Natural killer cell (primary cell): ENCODE measurements at regions of chr10 and their contacts with region 1.

Region 1: GRCh38 chr10:123994417-123995081 is 98.8 kb downstream of the CHST15 start:
- DNase-seq: peak; percentile 79 to 84
- ATAC-seq: peak; percentile 84 to 90 (median 87)
- H3K4me3 ChIP-seq: no peak overlapping the region
- H3K4me3 Mint-ChIP-seq: no peak overlapping the region
- H3K27ac ChIP-seq: no peak overlapping the region
- H3K27ac Mint-ChIP-seq: no peak overlapping the region
- H3K4me1 ChIP-seq: peaks cover 30% of the 10 kb centered on the region
- H3K4me1 Mint-ChIP-seq: peaks cover 10 to 18% of the 10 kb centered on the region in 2 donors
- H3K27me3 ChIP-seq: peaks cover 34% of the 10 kb centered on the region
- H3K27me3 Mint-ChIP-seq: peaks cover 66 to 80% of the 10 kb centered on the region in 2 donors
- CTCF ChIP-seq: peak; percentile 99

Region 2: DNA sequence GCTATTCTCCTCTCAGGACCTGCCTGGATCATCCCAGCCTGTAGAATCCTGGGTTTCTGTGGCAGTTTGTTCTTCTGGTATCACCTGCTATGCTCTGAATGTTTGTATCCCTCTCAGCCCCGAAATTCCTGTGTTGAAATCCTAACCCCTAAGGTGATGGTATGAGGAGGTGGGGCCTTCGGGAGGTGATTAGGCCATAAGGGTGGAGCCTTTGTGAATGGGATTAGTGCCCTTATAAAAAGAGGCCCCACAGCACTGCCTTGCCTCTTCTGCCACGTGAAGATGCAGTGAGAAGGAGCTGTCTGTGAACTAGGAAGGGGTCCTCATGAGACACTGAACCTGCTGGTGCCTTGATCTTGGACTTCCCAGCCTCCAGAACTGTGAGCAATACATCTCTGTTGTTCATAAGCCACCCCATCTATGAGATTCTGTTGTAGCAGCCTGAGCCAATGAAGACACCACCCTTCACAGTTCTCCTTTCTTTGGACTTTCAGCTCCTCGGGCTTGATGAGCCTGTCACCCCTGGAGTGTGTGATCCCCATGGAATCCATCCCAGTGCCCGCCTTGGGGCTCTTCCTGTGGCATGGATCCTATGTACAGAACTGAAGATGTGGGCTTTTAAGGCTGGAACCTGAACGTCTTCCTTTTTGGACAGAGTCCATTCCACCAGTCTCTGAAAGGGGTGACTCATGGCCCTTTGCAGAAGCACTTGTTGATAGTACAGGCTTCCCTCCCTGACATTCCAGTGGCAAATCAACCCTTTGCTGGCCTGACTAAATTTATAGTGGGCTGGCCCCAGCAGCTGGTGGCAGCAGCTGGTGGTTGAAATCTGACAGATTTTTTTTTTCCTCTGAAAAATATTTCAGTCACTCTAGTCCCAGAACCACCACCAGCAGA is 1867.5 kb before region 1 on chr10:
- intact Hi-C with region 1: no loop called
- DNase-seq: no peak
- ATAC-seq: no peak
- H3K4me3 ChIP-seq: no peak overlapping the region
- H3K4me3 Mint-ChIP-seq: no peak overlapping the region
- H3K27ac ChIP-seq: no peak overlapping the region
- H3K27ac Mint-ChIP-seq: no peak overlapping the region
- H3K4me1 ChIP-seq: no peaks in the 10 kb centered on the region
- H3K4me1 Mint-ChIP-seq: no peaks in the 10 kb centered on the region
- H3K27me3 ChIP-seq: no peaks in the 10 kb centered on the region
- H3K27me3 Mint-ChIP-seq: peaks cover 8 to 22% of the 10 kb centered on the region in 2 donors
- CTCF ChIP-seq: no peak

Region 3: DNA sequence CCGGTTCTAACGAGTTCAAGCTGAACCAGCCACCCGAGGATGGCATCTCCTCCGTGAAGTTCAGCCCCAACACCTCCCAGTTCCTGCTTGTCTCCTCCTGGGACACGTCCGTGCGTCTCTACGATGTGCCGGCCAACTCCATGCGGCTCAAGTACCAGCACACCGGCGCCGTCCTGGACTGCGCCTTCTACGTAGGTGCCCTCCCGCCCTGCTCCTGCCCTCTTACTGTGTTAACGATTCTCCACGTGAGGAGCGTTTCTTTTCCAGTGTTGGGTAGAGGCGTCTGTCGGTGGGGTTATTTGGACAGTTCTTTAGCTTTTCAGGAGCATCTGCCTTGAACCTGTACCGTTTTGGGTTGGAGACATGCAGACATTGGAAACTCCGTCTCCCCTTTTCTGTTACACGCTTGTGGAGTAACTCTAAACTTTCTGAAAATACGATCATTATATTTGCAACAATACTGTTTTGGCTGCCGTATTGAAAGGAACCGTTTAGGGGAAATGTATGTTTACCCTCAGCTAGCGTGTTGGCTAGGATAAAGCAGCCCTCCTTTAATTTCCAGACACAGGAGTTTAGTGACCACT is 839.5 kb before region 1 on chr10:
- intact Hi-C with region 1: no loop called
- DNase-seq: peak; percentile 21 to 57
- ATAC-seq: no peak
- H3K4me3 ChIP-seq: peak overlapping the region; percentile 99
- H3K4me3 Mint-ChIP-seq: peak overlapping the region; percentile 99
- H3K27ac ChIP-seq: peak overlapping the region; percentile 93
- H3K27ac Mint-ChIP-seq: peak overlapping the region; percentile 96 to 100
- H3K4me1 ChIP-seq: peaks cover 30% of the 10 kb centered on the region
- H3K4me1 Mint-ChIP-seq: peaks cover 56 to 58% of the 10 kb centered on the region in 2 donors
- H3K27me3 ChIP-seq: peaks cover 29% of the 10 kb centered on the region
- H3K27me3 Mint-ChIP-seq: peaks cover 18 to 19% of the 10 kb centered on the region in 2 donors
- CTCF ChIP-seq: no peak

Region 4: GRCh38 chr10:124106241-124106879 is 111.8 kb after region 1 on chr10:
- intact Hi-C with region 1: no loop called
- DNase-seq: no peak
- ATAC-seq: no peak
- H3K4me3 ChIP-seq: no peak overlapping the region
- H3K4me3 Mint-ChIP-seq: no peak overlapping the region
- H3K27ac ChIP-seq: no peak overlapping the region
- H3K27ac Mint-ChIP-seq: no peak overlapping the region
- H3K4me1 ChIP-seq: peaks cover 17% of the 10 kb centered on the region
- H3K4me1 Mint-ChIP-seq: no peaks in the 10 kb centered on the region
- H3K27me3 ChIP-seq: no peaks in the 10 kb centered on the region
- H3K27me3 Mint-ChIP-seq: peaks cover 11 to 13% of the 10 kb centered on the region in 2 donors
- CTCF ChIP-seq: no peak

Region 5: GRCh38 chr10:124388823-124389612 is 394.5 kb after region 1 on chr10:
- intact Hi-C with region 1: loop called (anchors 1 kb)
- DNase-seq: peak; percentile 94 to 97
- ATAC-seq: peak; percentile 97 to 99 (median 97)
- H3K4me3 ChIP-seq: peak overlapping the region; percentile 43
- H3K4me3 Mint-ChIP-seq: peak overlapping the region; percentile 49
- H3K27ac ChIP-seq: no peak overlapping the region
- H3K27ac Mint-ChIP-seq: peak overlapping the region in 1 of 2 donors; percentile 24
- H3K4me1 ChIP-seq: peaks cover 13% of the 10 kb centered on the region
- H3K4me1 Mint-ChIP-seq: no peaks in the 10 kb centered on the region
- H3K27me3 ChIP-seq: no peaks in the 10 kb centered on the region
- H3K27me3 Mint-ChIP-seq: peaks cover 5 to 9% of the 10 kb centered on the region in 2 donors
- CTCF ChIP-seq: peak; percentile 97

Region 6: GRCh38 chr10:125859128-125859817 is 1864.7 kb after region 1 on chr10:
- intact Hi-C with region 1: no loop called
- DNase-seq: no peak
- ATAC-seq: no peak
- H3K4me3 ChIP-seq: no peak overlapping the region
- H3K4me3 Mint-ChIP-seq: no peak overlapping the region
- H3K27ac ChIP-seq: no peak overlapping the region
- H3K27ac Mint-ChIP-seq: no peak overlapping the region
- H3K4me1 ChIP-seq: no peaks in the 10 kb centered on the region
- H3K4me1 Mint-ChIP-seq: no peaks in the 10 kb centered on the region
- H3K27me3 ChIP-seq: no peaks in the 10 kb centered on the region
- H3K27me3 Mint-ChIP-seq: no peaks in the 10 kb centered on the region
- CTCF ChIP-seq: no peak